ENCODE measurements at regions of chr11 and their contacts with region 1.

Region 1: GRCh38 chr11:134170919-134171281 is 52.9 kb downstream of the NCAPD3 start:
- DNase-seq: no peak
- ATAC-seq: no peak
- H3K4me3 ChIP-seq: no peak overlapping the region
- H3K4me3 Mint-ChIP-seq: no peak overlapping the region
- H3K27ac ChIP-seq: no peak overlapping the region
- H3K27ac Mint-ChIP-seq: no peak overlapping the region
- H3K4me1 ChIP-seq: no peaks in the 10 kb centered on the region
- H3K4me1 Mint-ChIP-seq: no peaks in the 10 kb centered on the region
- H3K27me3 ChIP-seq: no peaks in the 10 kb centered on the region
- H3K27me3 Mint-ChIP-seq: no peaks in the 10 kb centered on the region

Region 2: GRCh38 chr11:133197425-133197824 is 973.5 kb before region 1 on chr11:
- CTCF ChIA-PET with region 1: no interaction called
- POLR2A ChIA-PET with region 1: no interaction called
- DNase-seq: no peak
- ATAC-seq: no peak
- H3K4me3 ChIP-seq: no peak overlapping the region
- H3K4me3 Mint-ChIP-seq: no peak overlapping the region
- H3K27ac ChIP-seq: no peak overlapping the region
- H3K27ac Mint-ChIP-seq: no peak overlapping the region
- H3K4me1 ChIP-seq: no peaks in the 10 kb centered on the region
- H3K4me1 Mint-ChIP-seq: no peaks in the 10 kb centered on the region
- H3K27me3 ChIP-seq: no peaks in the 10 kb centered on the region
- H3K27me3 Mint-ChIP-seq: peaks cover 6 to 13% of the 10 kb centered on the region in 2 donors

Region 3: GRCh38 chr11:134207538-134208239 is 36.8 kb after region 1 on chr11:
- CTCF ChIA-PET with region 1: interaction called in 1 of 2 experiments, 10 read pairs
- POLR2A ChIA-PET with region 1: no interaction called
- DNase-seq: peak; percentile 39 to 72 (median 60)
- ATAC-seq: peak in 2 of 4 experiments; percentile 50 to 59
- H3K4me3 ChIP-seq: no peak overlapping the region
- H3K4me3 Mint-ChIP-seq: no peak overlapping the region
- H3K27ac ChIP-seq: no peak overlapping the region
- H3K27ac Mint-ChIP-seq: no peak overlapping the region
- H3K4me1 ChIP-seq: no peaks in the 10 kb centered on the region
- H3K4me1 Mint-ChIP-seq: peaks cover 0 to 5% (median 4%) of the 10 kb centered on the region in 3 donors
- H3K27me3 ChIP-seq: no peaks in the 10 kb centered on the region
- H3K27me3 Mint-ChIP-seq: no peaks in the 10 kb centered on the region